Esophagus squamous epithelium (tissue), 5 donors: ENCODE measurements at regions of chr18 and their contacts with region 1.

Region 1: DNA sequence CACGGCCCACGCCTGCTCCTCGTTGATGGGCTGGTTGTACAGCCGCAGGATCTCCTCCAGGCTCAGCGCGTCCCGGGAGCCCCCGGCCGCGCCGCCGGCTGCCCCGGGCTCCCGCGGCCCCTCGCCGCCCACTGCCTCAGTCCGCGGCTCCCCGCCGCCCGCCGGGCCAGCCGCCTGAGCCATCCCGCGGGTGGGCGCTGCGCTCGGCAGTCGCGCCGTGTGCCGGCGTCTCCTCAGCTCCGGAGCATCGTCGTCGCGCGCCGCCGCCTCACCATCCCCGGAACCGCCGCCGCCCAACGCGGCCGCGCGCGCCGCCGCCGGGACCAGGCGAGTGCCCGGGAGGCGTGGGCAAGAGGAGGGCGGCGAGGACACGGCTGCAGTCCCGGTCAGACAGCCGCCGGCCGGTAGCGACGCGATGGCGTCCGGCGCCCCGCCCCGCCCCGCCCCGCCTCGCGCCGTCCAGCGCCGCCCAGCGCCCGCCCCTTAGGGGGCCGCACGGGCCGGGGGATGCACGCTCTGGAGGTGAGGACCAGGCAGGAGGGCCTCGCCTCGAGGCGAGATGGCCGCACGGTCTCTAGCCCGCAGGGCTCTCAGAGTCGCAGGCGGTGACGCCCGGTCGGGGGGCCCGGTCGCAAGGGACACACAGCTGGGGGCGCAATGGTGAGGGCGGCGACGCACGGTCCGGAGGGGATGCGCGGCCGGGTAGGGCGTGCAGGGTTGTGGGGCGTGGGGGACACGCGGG is at the start of gene SPIRE1:
- DNase-seq: no peak
- H3K4me3 ChIP-seq: peak within 1 kb of the TSS; percentile 56 to 96 (median 89)
- H3K27ac ChIP-seq: peak within 1 kb of the TSS; percentile 83 to 97 (median 90)
- H3K4me1 ChIP-seq: peaks cover 0 to 42% (median 15%) of the 10 kb centered on the region in 3 donors
- H3K27me3 ChIP-seq: no peaks in the 10 kb centered on the region
- CTCF ChIP-seq: peak in 1 of 6 experiments; percentile 6
- POLR2A ChIP-seq: peak in 2 of 4 donors; percentile 44 to 48
- total RNA-seq, gene SPIRE1: 1.9 to 25.3 (median 13.4) TPM

Region 2: DNA sequence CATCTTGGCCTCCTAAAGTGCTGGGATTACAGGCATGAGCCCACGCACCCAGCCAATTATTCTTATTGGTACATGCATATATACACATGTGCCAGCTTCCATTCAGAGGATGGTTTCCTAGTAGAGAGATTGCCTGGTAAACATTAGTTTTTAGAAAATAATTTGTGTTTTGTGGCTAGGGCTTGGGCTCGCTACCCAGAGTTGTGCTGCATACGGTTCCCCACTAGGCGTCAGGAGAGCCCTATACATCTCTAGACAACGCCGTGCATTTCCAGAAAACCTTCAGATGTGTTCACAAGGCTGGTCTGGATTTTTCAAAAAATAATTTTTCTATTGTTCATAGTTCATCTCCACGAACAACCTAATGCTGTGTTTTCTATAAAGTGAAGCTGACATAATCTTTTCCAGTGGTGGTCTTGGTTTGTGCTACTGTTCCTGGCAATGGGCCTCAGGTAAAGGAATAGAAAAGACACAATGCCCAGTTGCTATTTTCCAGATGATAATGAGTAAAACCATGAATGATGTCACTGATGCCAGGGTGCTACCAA is 266.2 kb before region 1 on chr18:
- intact Hi-C with region 1: loop called (anchors 5 kb)
- DNase-seq: no peak
- H3K4me3 ChIP-seq: no peak overlapping the region
- H3K27ac ChIP-seq: no peak overlapping the region
- H3K4me1 ChIP-seq: no peaks in the 10 kb centered on the region
- H3K27me3 ChIP-seq: no peaks in the 10 kb centered on the region
- CTCF ChIP-seq: peak; percentile 29 to 92 (median 86)
- POLR2A ChIP-seq: no peak

Region 3: DNA sequence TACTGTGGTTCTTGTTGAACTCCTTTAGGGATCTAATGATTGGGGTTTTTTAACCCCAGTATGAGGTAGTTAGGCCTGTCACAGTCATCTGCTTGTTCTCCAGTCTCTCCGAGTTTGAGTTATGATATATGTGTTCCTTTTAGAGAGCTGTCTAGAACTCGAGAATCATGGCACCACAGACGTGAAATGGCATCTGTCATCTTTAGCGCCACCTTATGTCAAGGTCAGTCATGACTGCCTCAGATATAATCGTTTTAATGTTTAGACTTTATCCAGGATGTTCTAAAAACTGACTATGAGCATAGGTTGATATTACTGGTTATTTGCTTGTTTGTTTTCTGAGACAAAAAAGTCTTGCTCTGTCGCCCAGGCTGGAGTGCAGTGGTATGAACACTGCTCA is 445.5 kb after region 1 on chr18:
- intact Hi-C with region 1: no loop called
- DNase-seq: no peak
- H3K4me3 ChIP-seq: no peak overlapping the region
- H3K27ac ChIP-seq: no peak overlapping the region
- H3K4me1 ChIP-seq: no peaks in the 10 kb centered on the region
- H3K27me3 ChIP-seq: no peaks in the 10 kb centered on the region
- CTCF ChIP-seq: peak in 1 of 6 experiments; percentile 13
- POLR2A ChIP-seq: no peak